ENCODE measurements at regions of chr1 and their contacts with region 1.

Region 1: DNA sequence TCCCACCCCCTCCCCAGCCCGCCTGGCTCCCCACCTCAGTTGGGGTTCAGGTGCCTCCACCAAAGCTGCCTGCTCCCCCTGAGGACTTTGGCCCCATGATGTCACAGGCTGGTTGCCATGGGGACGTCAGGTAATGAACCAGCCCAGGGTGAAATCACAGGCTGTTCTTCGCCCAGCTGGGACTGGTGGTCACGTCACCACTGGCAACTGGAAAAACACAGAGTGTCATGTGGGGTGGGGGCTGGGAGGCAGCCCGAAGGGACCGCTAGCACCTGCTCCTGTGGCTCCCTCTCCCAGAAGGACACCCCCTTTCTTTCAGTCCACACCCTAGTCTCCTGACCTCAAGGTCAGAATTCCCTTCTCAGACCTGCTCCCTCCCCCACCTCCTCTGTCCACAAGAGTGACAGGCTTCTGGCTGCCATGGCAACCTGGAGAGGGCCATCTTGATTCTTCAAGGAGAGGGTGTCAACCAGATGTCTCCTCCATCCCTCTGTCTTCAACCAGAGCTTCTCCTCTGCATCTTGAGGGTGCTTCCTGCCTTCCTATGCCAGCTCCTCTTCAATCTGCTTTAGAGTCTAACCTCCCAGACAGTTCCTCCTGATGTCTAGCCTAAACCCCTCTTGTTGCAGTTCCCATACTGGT is 6.2 kb downstream of the FAM131C start:
- DNase-seq: no peak
- H3K4me3 ChIP-seq: no peak overlapping the region
- H3K27me3 ChIP-seq: 0 out of 2 replicates have a peak, but pooled peaks cover 2% of the 10 kb centered on the region
- CTCF ChIP-seq: no peak

Region 2: GRCh38 chr1:16055613-16056520 is 11.4 kb before region 1 on chr1:
- CTCF ChIA-PET with region 1: interaction called, 24 read pairs
- POLR2A ChIA-PET with region 1: no interaction called
- DNase-seq: no peak
- H3K4me3 ChIP-seq: no peak overlapping the region
- H3K27me3 ChIP-seq: no peaks in the 10 kb centered on the region
- CTCF ChIP-seq: peak; percentile 96

Measured in BJ (cell line).